Upper lobe of right lung (tissue), 1 donor: ENCODE measurements at regions of chrX and their contacts with region 1.

Region 1: GRCh38 chrX:118644378-118644777 is 83.0 kb upstream of the IL13RA1 start:
- DNase-seq: no peak
- ATAC-seq: peak; percentile 60
- H3K4me3 ChIP-seq: no peak overlapping the region
- H3K27ac ChIP-seq: no peak overlapping the region
- H3K4me1 ChIP-seq: no peaks in the 10 kb centered on the region
- H3K27me3 ChIP-seq: no peaks in the 10 kb centered on the region
- CTCF ChIP-seq: peak; percentile 47

Region 2: DNA sequence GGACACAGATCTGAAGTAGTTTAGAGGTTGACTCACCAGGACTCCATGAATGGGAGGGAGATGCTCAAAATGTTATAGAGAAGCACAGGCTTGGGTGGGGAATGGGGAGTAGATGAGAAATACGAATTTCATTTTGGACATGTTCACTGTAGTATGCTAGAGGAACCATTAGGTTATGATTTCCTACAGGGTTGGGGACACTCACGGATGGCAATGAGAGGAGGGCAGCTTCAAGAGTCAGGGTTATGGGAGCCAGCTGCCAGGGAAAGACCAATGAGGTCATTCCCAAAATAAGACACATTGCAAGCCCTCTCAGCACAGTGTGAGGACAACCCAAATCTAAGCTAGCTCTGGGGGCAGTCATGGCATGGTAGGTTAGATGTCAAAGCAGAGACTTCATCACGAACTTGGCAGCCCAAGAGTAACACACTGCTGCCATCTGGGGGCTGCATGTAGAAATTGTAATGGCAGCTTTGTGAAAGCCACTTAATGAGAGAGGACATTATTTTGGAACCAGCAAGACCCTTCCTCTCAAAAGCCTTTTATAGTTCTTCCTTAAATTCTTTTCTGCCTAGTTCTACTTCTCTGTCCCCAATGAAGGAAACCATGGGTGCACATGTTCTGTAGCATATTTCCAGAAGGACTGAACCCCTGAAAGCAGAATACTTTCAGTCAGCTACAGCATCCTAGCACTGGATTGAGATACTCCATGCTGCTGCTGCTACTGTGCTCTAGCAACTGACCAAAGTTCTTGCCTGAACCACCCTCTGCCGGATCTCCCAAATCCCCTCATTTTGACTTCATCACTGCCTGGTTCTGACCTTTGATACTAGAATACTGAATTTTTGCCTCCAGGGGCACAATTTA is 163.0 kb after region 1 on chrX:
- intact Hi-C with region 1: loop called (anchors 10 kb)
- DNase-seq: no peak
- ATAC-seq: peak; percentile 88
- H3K4me3 ChIP-seq: no peak overlapping the region
- H3K27ac ChIP-seq: no peak overlapping the region
- H3K4me1 ChIP-seq: no peaks in the 10 kb centered on the region
- H3K27me3 ChIP-seq: no peaks in the 10 kb centered on the region
- CTCF ChIP-seq: peak; percentile 63